Left colon (tissue), 2 donors: ENCODE measurements at regions of chr13 and their contacts with region 1.

Region 1: GRCh38 chr13:20924758-20925394 is 22.3 kb upstream of the XPO4 start:
- DNase-seq: peak; percentile 60 to 91
- ATAC-seq: peak; percentile 42

Region 2: GRCh38 chr13:20182231-20182846 is 742.5 kb before region 1 on chr13:
- intact Hi-C with region 1: loop called in 1 of 2 experiments (anchors 10 kb)
- DNase-seq: no peak
- ATAC-seq: peak; percentile 85

Region 3: GRCh38 chr13:20495082-20496023 is 429.5 kb before region 1 on chr13:
- intact Hi-C with region 1: loop called (anchors 10 kb)
- DNase-seq: peak; percentile 49 to 69
- ATAC-seq: peak; percentile 78

Region 4: DNA sequence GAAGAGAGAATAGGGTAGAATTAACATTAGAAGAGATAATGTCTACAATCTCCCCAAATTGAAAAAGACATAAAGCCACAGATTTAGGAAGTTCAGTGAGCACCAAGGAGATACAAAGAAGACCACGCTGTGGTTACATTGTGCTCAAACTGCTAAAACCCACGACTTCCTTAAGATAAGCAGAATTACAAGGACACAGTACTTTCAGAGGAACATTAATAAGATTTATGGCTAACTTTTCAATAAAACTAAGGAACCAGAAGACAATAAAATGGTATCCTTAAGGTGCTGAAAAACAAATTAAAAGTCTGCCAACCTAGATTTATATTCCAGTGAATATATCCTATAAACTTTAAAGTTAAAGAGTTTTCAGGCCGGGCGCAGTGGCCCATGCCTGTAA is 228.8 kb before region 1 on chr13:
- intact Hi-C with region 1: no loop called
- DNase-seq: no peak
- ATAC-seq: no peak

Region 5: GRCh38 chr13:20713751-20714150 is 211.1 kb before region 1 on chr13:
- intact Hi-C with region 1: loop called in 1 of 2 experiments (anchors 10 kb)
- DNase-seq: no peak
- ATAC-seq: no peak